ENCODE measurements at regions of chr9 and their contacts with region 1.

Region 1: DNA sequence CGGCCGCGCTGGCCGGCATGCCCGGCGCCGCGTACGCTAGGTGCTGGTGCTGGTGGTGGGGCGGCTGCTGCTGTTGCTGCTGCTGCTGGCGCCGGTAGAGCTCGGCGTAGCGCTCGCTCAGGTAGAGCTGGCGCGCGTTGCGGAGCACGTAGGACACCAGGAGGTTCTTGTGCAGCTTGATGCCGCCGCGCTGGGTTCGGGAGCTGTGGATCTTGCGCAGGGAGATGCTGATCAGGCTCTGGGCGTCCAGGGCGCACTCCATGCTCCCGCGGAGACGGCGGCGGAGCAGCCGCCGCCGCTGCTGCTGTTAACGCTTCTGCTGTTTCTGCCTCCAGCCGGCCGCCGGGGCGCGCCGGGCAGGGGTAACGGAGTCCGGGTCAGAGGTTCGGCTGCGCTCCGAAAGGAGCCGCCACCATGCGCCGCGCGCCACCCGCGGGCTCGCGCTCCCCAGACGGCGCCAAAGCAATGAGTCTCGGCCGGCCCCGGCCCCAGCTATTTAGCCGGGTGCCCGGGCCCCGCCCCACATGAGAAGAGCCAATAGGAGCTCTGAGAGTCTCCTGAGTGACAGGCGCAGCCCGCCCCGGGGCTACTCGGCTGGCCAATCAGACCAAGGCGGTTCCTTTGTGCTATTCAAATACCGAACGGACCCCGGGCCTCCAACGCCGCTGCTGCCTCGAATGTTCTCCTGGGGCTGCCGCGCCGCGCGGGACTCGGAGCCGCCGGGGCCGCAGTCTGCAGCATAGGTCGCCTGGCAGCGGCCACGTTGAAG is at the start of gene IER5L:
- DNase-seq: peak; percentile 95
- ATAC-seq: peak; percentile 87
- H3K4me3 ChIP-seq: peak within 1 kb of the TSS; percentile 48 to 94 (median 69)
- H3K4me3 Mint-ChIP-seq: peak within 1 kb of the TSS; percentile 93
- H3K27ac ChIP-seq: no peak within 1 kb of the TSS
- H3K27ac Mint-ChIP-seq: peak within 1 kb of the TSS; percentile 74
- H3K4me1 ChIP-seq: peaks cover 22 to 34% of the 10 kb centered on the region in 2 donors
- H3K4me1 Mint-ChIP-seq: peaks cover 22% of the 10 kb centered on the region
- H3K27me3 ChIP-seq: peaks cover 0 to 27% (median 15%) of the 10 kb centered on the region in 4 experiments
- H3K27me3 Mint-ChIP-seq: peaks cover 14% of the 10 kb centered on the region
- CTCF ChIP-seq: no peak
- total RNA-seq, gene IER5L: 12.9 and 13.2 TPM in 2 replicates

Region 2: GRCh38 chr9:129110740-129111527 is 67.0 kb before region 1 on chr9 and contains the starts of genes CRAT and PTPA:
- CTCF ChIA-PET with region 1: interaction called, 3 read pairs
- POLR2A ChIA-PET with region 1: no interaction called
- intact Hi-C with region 1: loop called (anchors 2 kb)
- DNase-seq: peak; percentile 96
- ATAC-seq: peak; percentile 88
- H3K4me3 ChIP-seq: peak within 1 kb of the TSS; percentile 92 to 98 (median 95)
- H3K4me3 Mint-ChIP-seq: peak within 1 kb of the TSS; percentile 96
- H3K27ac ChIP-seq: peak within 1 kb of the TSS; percentile 81 to 85
- H3K27ac Mint-ChIP-seq: peak within 1 kb of the TSS; percentile 96
- H3K4me1 ChIP-seq: peaks cover 12 to 19% of the 10 kb centered on the region in 2 donors
- H3K4me1 Mint-ChIP-seq: peaks cover 25% of the 10 kb centered on the region
- H3K27me3 ChIP-seq: no peaks in the 10 kb centered on the region
- H3K27me3 Mint-ChIP-seq: no peaks in the 10 kb centered on the region
- CTCF ChIP-seq: no peak
- total RNA-seq, gene CRAT: 11.8 and 14.1 TPM in 2 replicates
- total RNA-seq, gene PTPA: 72.8 and 73.9 TPM in 2 replicates

Region 3: GRCh38 chr9:129202613-129203555 is 24.9 kb after region 1 on chr9:
- CTCF ChIA-PET with region 1: interaction called, 3 read pairs
- POLR2A ChIA-PET with region 1: interaction called, 5 read pairs
- intact Hi-C with region 1: loop called (anchors 1 kb)
- DNase-seq: peak; percentile 93
- ATAC-seq: peak; percentile 100
- H3K4me3 ChIP-seq: peak overlapping the region in 4 of 5 experiments; percentile 56 to 70 (median 63)
- H3K4me3 Mint-ChIP-seq: peak overlapping the region; percentile 75
- H3K27ac ChIP-seq: peak overlapping the region in 1 of 2 donors; percentile 76
- H3K27ac Mint-ChIP-seq: peak overlapping the region; percentile 78
- H3K4me1 ChIP-seq: peaks cover 2 to 8% of the 10 kb centered on the region in 2 donors
- H3K4me1 Mint-ChIP-seq: peaks cover 3% of the 10 kb centered on the region
- H3K27me3 ChIP-seq: peaks cover 0 to 13% (median 0%) of the 10 kb centered on the region in 4 experiments
- H3K27me3 Mint-ChIP-seq: no peaks in the 10 kb centered on the region
- CTCF ChIP-seq: no peak

Region 4: GRCh38 chr9:129413537-129414376 is 235.8 kb after region 1 on chr9:
- CTCF ChIA-PET with region 1: no interaction called
- POLR2A ChIA-PET with region 1: no interaction called
- intact Hi-C with region 1: loop called (anchors 2 kb)
- DNase-seq: peak; percentile 99
- ATAC-seq: peak; percentile 71
- H3K4me3 ChIP-seq: peak overlapping the region in 4 of 5 experiments; percentile 75 to 79 (median 77)
- H3K4me3 Mint-ChIP-seq: peak overlapping the region; percentile 91
- H3K27ac ChIP-seq: peak overlapping the region; percentile 99
- H3K27ac Mint-ChIP-seq: peak overlapping the region; percentile 100
- H3K4me1 ChIP-seq: peaks cover 18 to 25% of the 10 kb centered on the region in 2 donors
- H3K4me1 Mint-ChIP-seq: peaks cover 25% of the 10 kb centered on the region
- H3K27me3 ChIP-seq: no peaks in the 10 kb centered on the region
- H3K27me3 Mint-ChIP-seq: no peaks in the 10 kb centered on the region
- CTCF ChIP-seq: no peak

Region 5: DNA sequence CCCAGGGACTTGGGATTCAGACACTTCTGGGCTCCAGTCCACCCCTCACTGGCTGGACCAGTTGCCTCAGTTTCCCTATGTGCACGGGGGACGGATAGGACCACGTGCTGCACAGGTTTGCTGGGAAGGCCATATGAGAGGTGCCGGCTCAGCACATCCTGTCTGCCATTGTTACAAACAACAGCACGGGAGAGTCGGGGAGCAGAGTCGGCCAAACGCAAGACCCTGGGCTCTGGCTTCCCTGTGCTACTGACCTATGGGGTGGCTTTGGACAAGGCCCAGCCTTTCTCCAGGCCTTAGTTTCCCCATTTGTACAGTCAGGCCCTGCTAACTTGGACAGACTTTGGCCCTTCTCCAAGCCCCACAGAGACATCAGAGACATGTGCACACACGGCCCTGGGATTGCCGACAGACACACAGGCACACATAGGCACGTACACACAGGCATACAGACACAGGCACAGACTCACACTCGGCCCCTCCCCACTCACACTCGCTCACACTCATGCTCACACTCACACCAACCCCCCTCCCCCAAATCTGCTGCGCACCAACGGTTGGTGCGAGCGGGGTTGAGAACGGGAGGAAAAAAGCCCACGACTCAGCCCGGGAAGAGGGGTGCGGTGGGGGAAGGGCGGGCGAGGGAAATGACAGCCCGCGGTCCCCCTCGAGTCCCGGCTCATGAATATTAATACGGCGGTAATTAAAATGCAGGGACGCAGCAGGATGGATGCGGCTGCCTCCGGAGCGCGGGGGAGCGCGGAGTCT is 309.9 kb after region 1 on chr9:
- CTCF ChIA-PET with region 1: interaction called, 4 read pairs
- POLR2A ChIA-PET with region 1: no interaction called
- intact Hi-C with region 1: loop called (anchors 1 kb)
- DNase-seq: peak; percentile 69
- ATAC-seq: peak; percentile 13
- H3K4me3 ChIP-seq: peak overlapping the region; percentile 38 to 62 (median 49)
- H3K4me3 Mint-ChIP-seq: peak overlapping the region; percentile 89
- H3K27ac ChIP-seq: peak overlapping the region in 1 of 2 donors; percentile 63
- H3K27ac Mint-ChIP-seq: peak overlapping the region; percentile 90
- H3K4me1 ChIP-seq: peaks cover 24 to 28% of the 10 kb centered on the region in 2 donors
- H3K4me1 Mint-ChIP-seq: peaks cover 35% of the 10 kb centered on the region
- H3K27me3 ChIP-seq: peaks cover 0 to 38% (median 9%) of the 10 kb centered on the region in 4 experiments
- H3K27me3 Mint-ChIP-seq: peaks cover 15% of the 10 kb centered on the region
- CTCF ChIP-seq: no peak

Region 6: GRCh38 chr9:129610473-129611301 is 432.7 kb after region 1 on chr9:
- CTCF ChIA-PET with region 1: interaction called, 26 read pairs
- POLR2A ChIA-PET with region 1: interaction called, 6 read pairs
- intact Hi-C with region 1: loop called (anchors 1 kb)
- DNase-seq: peak; percentile 81
- ATAC-seq: peak; percentile 77
- H3K4me3 ChIP-seq: peak overlapping the region; percentile 21 to 86 (median 59)
- H3K4me3 Mint-ChIP-seq: peak overlapping the region; percentile 79
- H3K27ac ChIP-seq: peak overlapping the region in 1 of 2 donors; percentile 39
- H3K27ac Mint-ChIP-seq: peak overlapping the region; percentile 61
- H3K4me1 ChIP-seq: peaks cover 19 to 21% of the 10 kb centered on the region in 2 donors
- H3K4me1 Mint-ChIP-seq: peaks cover 22% of the 10 kb centered on the region
- H3K27me3 ChIP-seq: peaks cover 0 to 13% (median 0%) of the 10 kb centered on the region in 4 experiments
- H3K27me3 Mint-ChIP-seq: no peaks in the 10 kb centered on the region
- CTCF ChIP-seq: peak; percentile 94